ENCODE measurements at regions of chr13 and their contacts with region 1.

Region 1: GRCh38 chr13:97109841-97110492 is 112.2 kb upstream of the MBNL2 start:
- DNase-seq: peak; percentile 74 to 83 (median 78)
- H3K4me3 ChIP-seq: no peak overlapping the region
- H3K4me3 Mint-ChIP-seq: peak overlapping the region in 6 of 8 donors; percentile 32 to 73 (median 52)
- H3K27ac ChIP-seq: no peak overlapping the region
- H3K27ac Mint-ChIP-seq: peak overlapping the region in 6 of 7 donors; percentile 13 to 91 (median 53)
- H3K4me1 ChIP-seq: peaks cover 16% of the 10 kb centered on the region
- H3K4me1 Mint-ChIP-seq: peaks cover 9 to 14% (median 11%) of the 10 kb centered on the region in 4 donors
- H3K27me3 ChIP-seq: no peaks in the 10 kb centered on the region
- H3K27me3 Mint-ChIP-seq: peaks cover 0 to 8% of the 10 kb centered on the region in 2 donors

Region 2: DNA sequence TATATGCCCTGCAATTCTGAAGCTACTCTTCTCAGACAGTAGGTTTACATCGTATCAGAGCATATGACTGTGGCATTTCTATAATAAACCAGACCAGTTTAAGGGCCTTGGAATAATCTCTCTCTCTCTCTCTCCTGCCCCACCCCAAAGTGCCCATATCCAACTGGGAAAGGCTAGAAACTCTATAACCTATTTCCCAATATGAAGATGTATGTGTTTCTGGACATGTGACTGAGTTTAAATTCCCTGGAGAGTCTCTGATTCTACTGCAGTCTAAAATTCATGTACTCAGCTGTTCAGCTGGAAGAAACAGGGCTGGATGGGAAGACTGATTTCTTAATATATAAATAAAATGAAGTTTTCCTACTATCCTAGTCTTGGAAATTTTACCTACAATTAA is 20.2 kb after region 1 on chr13:
- CTCF ChIA-PET with region 1: interaction called, 15 read pairs
- POLR2A ChIA-PET with region 1: no interaction called
- intact Hi-C with region 1: no loop called
- DNase-seq: no peak
- H3K4me3 ChIP-seq: no peak overlapping the region
- H3K4me3 Mint-ChIP-seq: no peak overlapping the region
- H3K27ac ChIP-seq: no peak overlapping the region
- H3K27ac Mint-ChIP-seq: no peak overlapping the region
- H3K4me1 ChIP-seq: no peaks in the 10 kb centered on the region
- H3K4me1 Mint-ChIP-seq: peaks cover 0 to 2% (median 1%) of the 10 kb centered on the region in 4 donors
- H3K27me3 ChIP-seq: no peaks in the 10 kb centered on the region
- H3K27me3 Mint-ChIP-seq: peaks cover 6 to 13% of the 10 kb centered on the region in 2 donors

Region 3: GRCh38 chr13:97221989-97222700 is 112.2 kb after region 1 on chr13 and contains the start of gene MBNL2:
- CTCF ChIA-PET with region 1: interaction called, 72 read pairs
- POLR2A ChIA-PET with region 1: interaction called, 7 read pairs
- intact Hi-C with region 1: loop called (anchors 2 kb)
- DNase-seq: peak; percentile 82 to 95 (median 84)
- H3K4me3 ChIP-seq: peak within 1 kb of the TSS; percentile 49 to 76
- H3K4me3 Mint-ChIP-seq: peak within 1 kb of the TSS; percentile 91 to 96 (median 94)
- H3K27ac ChIP-seq: peak within 1 kb of the TSS; percentile 90
- H3K27ac Mint-ChIP-seq: peak within 1 kb of the TSS; percentile 96 to 99 (median 98)
- H3K4me1 ChIP-seq: peaks cover 42% of the 10 kb centered on the region
- H3K4me1 Mint-ChIP-seq: peaks cover 25 to 52% (median 34%) of the 10 kb centered on the region in 4 donors
- H3K27me3 ChIP-seq: no peaks in the 10 kb centered on the region
- H3K27me3 Mint-ChIP-seq: no peaks in the 10 kb centered on the region
- total RNA-seq, gene MBNL2: 33.0 to 36.2 TPM

Region 4: DNA sequence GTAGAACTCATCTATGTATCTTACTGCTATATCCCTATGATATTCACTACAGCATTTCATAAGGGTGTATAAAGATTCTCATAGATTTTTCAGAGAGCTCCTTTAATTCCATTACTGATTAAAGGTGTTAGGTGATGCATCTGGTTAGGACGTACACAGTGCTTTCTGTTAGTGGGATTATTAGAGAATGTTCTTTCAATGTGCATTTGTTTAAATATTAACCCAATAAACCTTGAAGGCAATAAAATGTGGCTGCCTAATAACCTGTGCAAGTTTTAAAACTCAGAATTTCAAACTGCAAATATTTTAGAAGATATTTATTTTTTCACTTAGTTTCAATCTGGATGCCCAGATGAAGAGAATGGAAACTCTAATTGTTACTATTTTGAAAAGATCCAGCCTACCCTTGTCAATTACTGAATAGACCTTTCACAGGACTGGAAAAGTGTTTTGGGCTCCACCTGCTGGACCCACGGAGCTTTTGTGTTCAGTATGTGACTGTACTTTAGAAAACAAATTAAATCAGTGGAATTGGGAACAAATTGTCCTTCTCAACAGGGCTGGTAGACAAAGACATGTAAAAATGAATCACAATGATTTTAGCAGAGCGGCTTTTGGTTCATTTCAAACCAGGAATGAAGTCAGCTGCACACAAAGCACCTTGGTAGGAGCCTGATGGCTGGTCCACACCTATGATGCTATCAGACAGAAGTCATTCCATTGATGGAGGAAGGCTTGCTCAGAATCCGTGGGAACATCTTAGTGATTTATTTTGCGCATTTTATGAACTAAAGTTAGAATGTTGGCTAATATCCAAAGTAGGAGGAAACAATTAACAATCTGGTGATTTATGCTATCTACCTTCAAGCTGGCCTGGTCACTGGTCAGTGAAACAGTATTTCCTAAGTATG is 234.6 kb after region 1 on chr13:
- CTCF ChIA-PET with region 1: interaction called, 255 read pairs
- POLR2A ChIA-PET with region 1: interaction called, 11 read pairs
- intact Hi-C with region 1: loop called (anchors 1 kb)
- DNase-seq: peak in 4 of 5 donors; percentile 38 to 46 (median 44)
- H3K4me3 ChIP-seq: no peak overlapping the region
- H3K4me3 Mint-ChIP-seq: no peak overlapping the region
- H3K27ac ChIP-seq: no peak overlapping the region
- H3K27ac Mint-ChIP-seq: no peak overlapping the region
- H3K4me1 ChIP-seq: peaks cover 10% of the 10 kb centered on the region
- H3K4me1 Mint-ChIP-seq: peaks cover 6 to 8% (median 7%) of the 10 kb centered on the region in 4 donors
- H3K27me3 ChIP-seq: no peaks in the 10 kb centered on the region
- H3K27me3 Mint-ChIP-seq: no peaks in the 10 kb centered on the region